Activated T-helper 2 cell treated with anti-CD3 and anti-CD28 coated beads, Interferon-gamma antibody, Interleukin-2, Interleukin-4, amounts not matched to agents 10 μg/mL and 5 μg/mL and 100 μg/mL, durations not matched to agents 14 hours and 24 hours and 36 hours (primary cell): ENCODE measurements at regions of chr15 and their contacts with region 1.

Region 1: DNA sequence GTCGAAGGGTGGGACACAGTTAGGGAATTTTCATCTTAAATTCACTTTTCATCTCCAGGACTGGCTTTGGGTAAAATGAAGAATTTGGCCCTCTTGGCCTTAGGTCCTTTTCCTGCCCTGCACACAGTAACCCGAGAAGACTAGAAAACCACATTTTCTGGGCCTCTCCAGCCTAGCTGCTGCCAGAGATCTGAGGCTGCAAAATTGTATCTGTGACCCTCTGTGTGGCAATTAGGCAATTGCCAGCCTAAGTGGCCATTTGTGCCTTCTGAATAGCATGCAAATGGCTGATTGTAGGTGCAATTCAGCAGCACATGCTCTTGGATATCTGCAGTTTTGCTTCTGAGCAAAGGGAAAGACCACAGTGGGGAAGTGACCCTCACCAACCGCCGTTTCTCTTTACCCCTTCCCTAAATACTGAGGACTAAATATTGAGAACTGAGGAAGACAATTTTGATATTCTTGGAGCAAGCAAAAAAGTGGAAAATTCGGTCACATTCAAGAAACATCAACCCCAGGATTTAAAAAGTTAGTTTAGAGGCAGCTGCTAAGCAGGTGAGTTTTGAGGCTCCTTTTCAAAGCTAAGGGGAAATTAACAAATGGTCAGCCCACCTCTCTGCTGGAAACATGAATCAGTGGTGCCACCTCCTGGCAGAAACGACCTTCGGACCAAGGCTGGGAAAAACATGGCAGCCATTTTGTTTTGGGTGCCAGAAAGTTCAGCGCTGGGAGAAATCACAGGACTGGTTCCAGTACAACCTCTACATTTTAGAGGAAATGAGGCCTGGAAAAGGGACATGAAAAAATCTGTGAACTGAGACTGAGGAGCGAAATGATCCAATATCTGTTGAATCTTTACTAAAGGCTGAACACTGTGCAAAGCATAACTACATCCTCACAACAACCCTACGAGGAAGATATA is 56.6 kb upstream of the PRTG start:
- DNase-seq: no peak
- H3K4me3 Mint-ChIP-seq: no peak overlapping the region
- H3K27ac Mint-ChIP-seq: no peak overlapping the region
- H3K4me1 Mint-ChIP-seq: peaks cover 2% of the 10 kb centered on the region
- H3K27me3 Mint-ChIP-seq: no peaks in the 10 kb centered on the region

Region 2: GRCh38 chr15:55649054-55649423 is 150.5 kb before region 1 on chr15:
- intact Hi-C with region 1: loop called (anchors 1 kb)
- DNase-seq: no peak
- H3K4me3 Mint-ChIP-seq: no peak overlapping the region
- H3K27ac Mint-ChIP-seq: no peak overlapping the region
- H3K4me1 Mint-ChIP-seq: peaks cover 16% of the 10 kb centered on the region
- H3K27me3 Mint-ChIP-seq: peaks cover 4% of the 10 kb centered on the region

Region 3: DNA sequence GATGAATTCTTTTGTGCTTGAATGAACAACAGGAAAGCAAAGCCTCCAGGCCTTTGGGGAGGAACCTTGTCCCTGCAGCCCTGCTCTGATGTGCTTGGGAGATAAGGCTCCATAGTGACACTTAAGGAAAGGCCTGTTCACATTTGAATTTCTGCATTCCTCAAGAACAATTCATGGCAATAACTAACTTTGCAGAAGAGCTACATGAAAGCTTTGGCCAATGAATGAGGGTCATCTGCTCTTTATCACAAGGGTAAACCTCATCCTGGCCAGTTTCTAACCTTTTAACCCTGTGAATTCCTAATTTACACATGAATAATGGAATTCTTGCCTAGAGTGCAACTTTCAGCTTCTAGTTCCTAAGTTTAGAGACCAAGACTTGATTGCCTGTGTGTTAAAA is 62.2 kb before region 1 on chr15:
- intact Hi-C with region 1: no loop called
- DNase-seq: no peak
- H3K4me3 Mint-ChIP-seq: no peak overlapping the region
- H3K27ac Mint-ChIP-seq: no peak overlapping the region
- H3K4me1 Mint-ChIP-seq: no peaks in the 10 kb centered on the region
- H3K27me3 Mint-ChIP-seq: peaks cover 39% of the 10 kb centered on the region